Breast epithelium (tissue), 4 donors: ENCODE measurements at regions of chr17 and their contacts with region 1.

Region 1: GRCh38 chr17:75549221-75550138 is 24.0 kb downstream of the LLGL2 start:
- DNase-seq: peak; percentile 87 to 88
- H3K4me3 ChIP-seq: peak overlapping the region in 2 of 3 donors; percentile 11 to 50
- H3K27ac ChIP-seq: peak overlapping the region; percentile 83 to 97
- H3K4me1 ChIP-seq: peaks cover 0 to 5% of the 10 kb centered on the region in 2 donors
- H3K27me3 ChIP-seq: no peaks in the 10 kb centered on the region
- CTCF ChIP-seq: no peak
- POLR2A ChIP-seq: peak; percentile 56

Region 2: DNA sequence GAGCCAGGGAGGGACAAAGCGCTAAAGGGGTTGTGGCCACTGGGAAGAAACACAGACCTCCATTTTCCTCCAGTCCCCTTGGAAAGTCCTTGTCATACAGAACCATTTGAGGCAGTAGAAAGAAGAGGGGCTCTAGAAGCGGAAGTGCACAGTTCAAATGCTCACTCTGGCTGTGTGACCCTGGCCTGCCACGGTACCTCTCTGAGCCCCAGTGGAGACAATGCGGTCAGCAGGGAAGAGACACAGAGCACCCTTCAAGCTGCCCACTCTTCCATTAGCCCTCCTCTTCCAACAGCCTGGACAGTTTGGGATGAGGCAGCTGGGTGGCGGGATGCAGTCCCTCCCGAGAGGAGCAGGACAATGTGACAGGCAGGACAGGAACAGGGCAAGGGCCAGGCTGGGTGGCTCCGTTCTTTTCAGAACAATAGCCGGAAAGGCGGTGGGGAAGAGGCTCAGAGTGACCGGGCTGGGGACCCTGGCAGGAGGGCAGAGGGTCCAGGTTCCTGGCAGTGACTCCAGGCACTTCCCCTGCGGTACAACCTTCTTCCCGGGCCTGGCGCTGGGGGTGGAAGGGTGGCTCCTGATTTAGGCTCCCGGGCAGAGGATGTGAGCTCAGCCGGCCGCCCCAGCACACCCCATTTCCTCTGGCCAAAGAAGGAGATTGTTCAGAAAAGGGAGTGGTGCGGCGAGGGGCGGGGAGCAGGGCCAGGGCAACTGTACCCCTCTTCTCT is 39.8 kb before region 1 on chr17:
- intact Hi-C with region 1: loop called (anchors 1 kb)
- DNase-seq: no peak
- H3K4me3 ChIP-seq: peak overlapping the region in 1 of 3 donors; percentile 54
- H3K27ac ChIP-seq: peak overlapping the region; percentile 62 to 95
- H3K4me1 ChIP-seq: peaks cover 4 to 23% of the 10 kb centered on the region in 2 donors
- H3K27me3 ChIP-seq: no peaks in the 10 kb centered on the region
- CTCF ChIP-seq: no peak
- POLR2A ChIP-seq: no peak

Region 3: DNA sequence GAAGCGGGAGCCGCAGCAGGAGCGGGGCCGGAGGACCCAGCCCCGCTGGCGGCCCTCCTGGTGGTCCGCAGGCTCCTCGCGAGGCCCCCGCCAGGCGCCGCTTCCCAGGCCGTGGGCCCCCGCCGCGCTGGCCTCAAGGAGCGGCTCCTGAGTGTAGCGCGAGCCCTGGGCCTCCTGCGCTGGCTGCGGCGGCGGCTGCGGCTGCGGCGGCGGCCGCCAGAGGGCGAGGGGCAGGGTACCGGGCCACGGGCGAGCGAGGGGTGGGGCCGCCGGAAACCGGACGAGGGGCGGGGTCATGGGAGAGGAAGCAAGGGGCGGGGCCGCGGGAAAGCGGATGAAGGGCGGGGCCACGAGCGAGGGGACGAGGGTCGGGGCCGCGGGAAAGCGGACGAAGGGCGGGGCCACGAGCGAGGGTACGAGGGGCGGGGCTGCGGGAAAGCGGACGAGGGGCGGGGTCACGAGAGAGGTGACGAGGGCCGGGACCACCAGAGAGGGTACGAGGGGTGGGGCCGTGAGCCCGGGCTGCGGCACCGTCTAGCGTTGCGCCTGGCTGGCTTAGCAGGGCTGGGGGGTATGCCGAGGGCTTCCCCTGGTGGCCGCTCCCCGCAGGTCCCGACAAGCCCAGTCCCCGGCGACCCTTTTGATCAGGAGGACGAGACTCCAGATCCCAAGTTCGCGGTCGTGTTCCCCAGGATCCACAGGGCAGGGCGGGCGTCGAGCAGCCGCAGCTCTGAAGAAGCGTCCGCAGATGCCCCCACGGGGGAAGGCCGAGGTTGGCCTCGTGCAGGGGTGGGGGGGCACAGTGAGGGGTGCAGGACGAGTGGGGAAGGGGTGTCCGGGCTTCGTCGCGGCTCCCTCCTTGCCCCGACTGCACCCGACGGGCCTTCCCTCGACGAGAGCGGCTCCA is 39.8 kb after region 1 on chr17:
- intact Hi-C with region 1: loop called (anchors 1 kb)
- DNase-seq: peak; percentile 88 to 97
- H3K4me3 ChIP-seq: peak overlapping the region; percentile 70 to 91 (median 73)
- H3K27ac ChIP-seq: peak overlapping the region; percentile 81 to 96
- H3K4me1 ChIP-seq: peaks cover 0 to 7% of the 10 kb centered on the region in 2 donors
- H3K27me3 ChIP-seq: no peaks in the 10 kb centered on the region
- CTCF ChIP-seq: peak in 2 of 3 donors; percentile 26 to 92
- POLR2A ChIP-seq: no peak